ENCODE measurements at regions of chr17 and their contacts with region 1.

Region 1: DNA sequence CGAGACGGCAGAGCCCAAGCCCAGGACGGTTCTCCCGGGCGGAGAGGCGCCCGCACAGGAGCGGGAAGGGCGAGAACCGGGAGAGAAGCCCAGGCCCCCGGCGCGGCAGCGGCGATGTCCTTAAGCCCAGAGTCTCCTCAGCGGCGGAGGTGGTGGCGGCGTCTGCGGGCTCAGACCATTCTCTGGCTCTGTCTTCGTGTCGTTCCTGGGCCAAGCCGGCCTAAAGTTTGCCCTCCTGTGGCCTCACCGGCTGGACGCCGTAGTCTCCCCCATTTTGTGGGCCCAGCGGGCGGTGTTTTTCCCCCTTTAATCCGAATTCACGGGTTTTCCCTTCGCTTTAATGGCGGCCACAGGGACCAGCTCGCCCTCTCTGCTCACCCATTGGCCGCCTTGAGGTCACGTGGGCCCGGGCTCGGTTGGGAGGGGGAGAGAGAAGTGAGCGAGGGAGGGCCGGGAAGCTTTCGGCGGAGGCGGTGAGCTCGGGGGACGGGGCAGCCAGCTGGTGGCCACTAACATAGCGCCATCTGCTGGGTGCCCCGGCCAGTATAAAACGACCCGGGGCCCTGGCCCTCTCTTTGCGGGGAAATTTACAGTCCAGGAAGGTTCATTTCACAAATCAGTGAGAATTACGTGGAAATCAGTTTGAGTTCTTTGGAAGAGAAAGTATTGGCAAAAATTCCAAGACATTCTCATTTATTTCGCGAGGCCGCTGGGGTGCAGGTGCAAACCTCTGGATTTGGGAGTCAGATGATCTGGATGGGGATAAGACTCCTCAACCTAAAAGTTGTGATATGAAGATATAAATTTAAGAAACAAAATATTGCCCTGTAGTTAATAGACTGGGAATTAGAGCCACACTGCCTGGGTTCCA is 755 bp upstream of the MED13 start:
- DNase-seq: peak; percentile 97
- ATAC-seq: peak; percentile 94
- H3K4me3 ChIP-seq: peak overlapping the region; percentile 62 to 100 (median 99)
- H3K27ac ChIP-seq: peak overlapping the region; percentile 99
- H3K4me1 ChIP-seq: peaks cover 48% of the 10 kb centered on the region
- H3K27me3 ChIP-seq: no peaks in the 10 kb centered on the region; a peak in 1 of 5 replicates
- CTCF ChIP-seq: peak; percentile 94
- EP300 ChIP-seq: peak in 1 of 2 experiments; percentile 42; a peak in 1 of 4 replicates
- POLR2A ChIP-seq: peak; percentile 85 to 90
- RAD21 ChIP-seq: peak; percentile 86

Region 2: DNA sequence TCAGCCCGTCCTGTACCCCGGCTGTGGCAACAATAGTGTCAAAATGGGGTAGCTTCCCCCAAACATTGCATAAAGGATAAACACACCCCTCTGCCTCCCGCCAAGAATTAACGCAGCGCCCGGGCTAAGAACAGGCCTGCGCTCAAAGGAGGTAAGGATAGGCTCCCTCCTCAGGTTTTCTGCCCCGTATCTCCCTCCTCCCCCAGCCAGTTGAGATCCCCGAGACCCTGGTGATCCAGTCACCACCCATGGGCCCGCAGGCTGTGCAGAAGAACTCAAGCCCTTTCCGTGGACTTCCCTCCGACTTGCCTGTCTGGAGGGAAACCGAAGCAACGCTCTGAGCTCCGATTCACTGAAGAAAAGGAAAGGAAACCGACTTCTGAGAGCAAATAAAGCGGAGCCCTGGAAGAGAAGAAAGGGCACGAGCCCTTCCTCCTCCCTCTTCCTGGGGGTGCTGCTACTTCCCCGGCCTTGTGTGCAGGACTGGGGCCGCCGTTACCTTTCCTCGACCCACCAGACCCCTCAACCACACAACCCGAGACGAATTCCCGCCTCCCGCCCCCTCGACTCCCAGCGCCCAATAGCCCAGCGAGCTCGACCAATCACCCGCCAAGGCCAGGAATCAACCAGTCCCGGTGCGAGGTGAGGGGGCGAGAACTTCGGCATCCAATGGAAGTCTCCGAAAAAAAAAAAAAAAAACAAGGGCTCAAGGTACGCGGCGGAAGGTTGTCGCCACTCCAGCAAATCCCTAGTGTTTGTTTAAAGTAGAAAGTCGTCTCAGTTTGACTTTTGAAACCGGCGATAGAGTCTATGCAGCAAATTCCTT is 202.6 kb before region 1 on chr17 and contains the start of gene BRIP1:
- CTCF ChIA-PET with region 1: no interaction called
- POLR2A ChIA-PET with region 1: interaction called, 13 read pairs
- in situ Hi-C with region 1: no loop called
- intact Hi-C with region 1: no loop called
- DNase-seq: peak; percentile 98
- ATAC-seq: peak; percentile 99
- H3K4me3 ChIP-seq: peak within 1 kb of the TSS; percentile 71 to 93 (median 91)
- H3K27ac ChIP-seq: peak within 1 kb of the TSS; percentile 95
- H3K4me1 ChIP-seq: peaks cover 34% of the 10 kb centered on the region
- H3K27me3 ChIP-seq: no peaks in the 10 kb centered on the region; a peak in 1 of 5 replicates
- CTCF ChIP-seq: no peak
- EP300 ChIP-seq: peak; percentile 45 to 71; a peak in 2 of 4 replicates
- POLR2A ChIP-seq: peak; percentile 86 to 96
- RAD21 ChIP-seq: no peak
- total RNA-seq, gene BRIP1: 27.7 and 33.5 TPM in 2 replicates

Region 3: GRCh38 chr17:62085511-62086408 is 19.9 kb after region 1 on chr17:
- CTCF ChIA-PET with region 1: no interaction called
- POLR2A ChIA-PET with region 1: interaction called, 35 read pairs
- in situ Hi-C with region 1: no loop called
- intact Hi-C with region 1: no loop called
- DNase-seq: peak; percentile 79
- ATAC-seq: peak; percentile 78
- H3K4me3 ChIP-seq: no peak overlapping the region; a peak in 1 of 6 replicates
- H3K27ac ChIP-seq: peak overlapping the region; percentile 48
- H3K4me1 ChIP-seq: peaks cover 63% of the 10 kb centered on the region
- H3K27me3 ChIP-seq: no peaks in the 10 kb centered on the region
- CTCF ChIP-seq: peak; percentile 7; the same call in 1 of the 2 replicates
- EP300 ChIP-seq: peak in 1 of 2 experiments; percentile 68; a peak in 2 of 4 replicates
- POLR2A ChIP-seq: no peak
- RAD21 ChIP-seq: peak; percentile 27; the same call in 1 of the 2 replicates

Region 4: GRCh38 chr17:62101090-62101489 is 35.3 kb after region 1 on chr17:
- CTCF ChIA-PET with region 1: no interaction called
- POLR2A ChIA-PET with region 1: interaction called, 18 read pairs
- in situ Hi-C with region 1: no loop called
- intact Hi-C with region 1: no loop called
- DNase-seq: no peak
- ATAC-seq: peak; percentile 57
- H3K4me3 ChIP-seq: peak overlapping the region in 2 of 3 experiments; percentile 2 to 4; a peak in 2 of 6 replicates
- H3K27ac ChIP-seq: peak overlapping the region; percentile 19
- H3K4me1 ChIP-seq: peaks cover 62% of the 10 kb centered on the region
- H3K27me3 ChIP-seq: no peaks in the 10 kb centered on the region; a peak in 1 of 5 replicates
- CTCF ChIP-seq: no peak
- EP300 ChIP-seq: no peak
- POLR2A ChIP-seq: no peak
- RAD21 ChIP-seq: no peak